HepG2 (cell line): ENCODE measurements at regions of chr12 and their contacts with region 1.

Region 1: GRCh38 chr12:6367065-6367968 is 8.0 kb downstream of the SCNN1A start:
- DNase-seq: peak; percentile 56
- ATAC-seq: no peak
- H3K4me3 ChIP-seq: no peak overlapping the region
- H3K27ac ChIP-seq: peak overlapping the region; percentile 44
- H3K4me1 ChIP-seq: peaks cover 61% of the 10 kb centered on the region
- H3K27me3 ChIP-seq: no peaks in the 10 kb centered on the region
- CTCF ChIP-seq: peak; percentile 69
- EP300 ChIP-seq: no peak
- POLR2A ChIP-seq: no peak
- RAD21 ChIP-seq: peak; percentile 44; the same call in 1 of the 2 replicates

Region 2: DNA sequence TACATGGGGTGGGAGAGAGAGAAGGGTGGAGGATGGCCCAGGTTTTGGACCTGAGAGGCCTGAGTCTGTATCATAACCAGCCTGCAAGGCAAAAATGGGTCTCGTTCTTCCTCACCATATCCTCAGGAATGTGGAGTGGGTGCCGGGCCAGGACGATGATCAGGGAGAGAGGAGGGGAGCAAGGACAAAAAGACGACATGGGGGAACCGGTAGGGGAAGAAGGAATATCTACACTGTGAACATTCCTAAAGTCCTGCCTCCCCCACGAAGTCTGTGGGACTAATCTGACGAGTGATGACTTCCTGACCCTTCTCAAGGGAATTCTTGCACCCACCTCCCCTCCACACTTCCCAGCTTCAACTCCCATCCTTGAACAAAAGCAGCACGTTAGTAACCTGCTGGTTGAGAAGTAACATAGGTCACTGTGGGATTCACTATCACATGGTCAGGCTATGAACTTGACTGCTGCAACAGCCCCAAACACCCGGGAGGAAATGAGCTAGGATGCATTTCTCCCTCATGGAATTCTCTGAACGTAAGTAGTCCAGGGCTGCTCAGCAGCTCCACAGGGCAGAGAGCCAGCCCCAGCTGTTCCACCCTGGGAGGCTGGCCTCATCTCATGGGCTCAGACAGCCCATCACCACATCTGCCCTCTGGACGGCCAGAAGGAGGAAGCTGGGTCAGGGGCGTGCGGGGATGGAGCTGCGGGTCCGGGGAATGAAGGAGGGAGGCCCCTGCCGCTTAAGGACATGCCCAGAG is 206.0 kb before region 1 on chr12:
- CTCF ChIA-PET with region 1: no interaction called
- POLR2A ChIA-PET with region 1: no interaction called
- in situ Hi-C with region 1: no loop called
- intact Hi-C with region 1: no loop called
- DNase-seq: no peak
- ATAC-seq: peak; percentile 14; the same call in 1 of the 3 replicates
- H3K4me3 ChIP-seq: no peak overlapping the region
- H3K27ac ChIP-seq: no peak overlapping the region
- H3K4me1 ChIP-seq: peaks cover 30% of the 10 kb centered on the region
- H3K27me3 ChIP-seq: peaks cover 4 to 18% of the 10 kb centered on the region in 2 experiments; a peak in 2 of 5 replicates
- CTCF ChIP-seq: no peak
- EP300 ChIP-seq: no peak
- POLR2A ChIP-seq: no peak
- RAD21 ChIP-seq: no peak

Region 3: DNA sequence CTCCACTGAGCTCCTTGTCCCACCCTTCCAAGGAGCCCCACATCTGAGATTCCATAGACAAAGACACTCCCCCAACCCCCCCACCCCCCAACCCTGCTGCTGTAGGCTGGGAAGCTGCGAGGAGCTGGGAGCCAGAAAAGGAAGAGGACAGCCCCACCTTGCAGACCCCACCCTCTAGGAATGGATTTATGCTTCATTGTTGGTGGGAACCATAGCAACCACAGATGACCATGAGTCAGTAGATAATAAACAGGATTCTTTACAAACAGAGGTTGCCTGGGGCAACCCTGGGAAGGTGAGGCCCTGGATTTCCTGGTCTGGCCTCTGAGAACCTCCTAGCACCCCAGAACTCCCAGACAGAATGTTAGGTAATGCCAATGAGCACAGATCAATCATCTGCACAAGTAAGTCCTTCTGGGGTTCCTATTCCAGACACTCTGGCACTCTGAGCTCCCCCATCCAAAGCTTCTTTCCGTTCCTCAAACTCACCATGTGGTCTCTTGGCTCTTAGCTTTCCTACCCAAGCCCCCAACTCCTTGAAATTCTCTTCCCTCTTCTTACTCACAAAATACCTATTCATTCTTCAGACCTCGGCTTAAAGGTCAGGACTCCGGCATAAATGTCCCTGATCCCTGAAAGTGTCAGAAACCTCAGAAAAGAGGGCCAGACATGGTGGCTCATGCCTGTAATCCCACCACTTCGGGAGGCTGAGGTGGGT is 72.1 kb before region 1 on chr12:
- CTCF ChIA-PET with region 1: no interaction called
- POLR2A ChIA-PET with region 1: interaction called, 10 read pairs
- in situ Hi-C with region 1: no loop called
- intact Hi-C with region 1: no loop called
- DNase-seq: peak; percentile 98
- ATAC-seq: peak; percentile 91
- H3K4me3 ChIP-seq: peak overlapping the region; percentile 5 to 51 (median 33); a peak in 4 of 6 replicates
- H3K27ac ChIP-seq: peak overlapping the region; percentile 100
- H3K4me1 ChIP-seq: peaks cover 75% of the 10 kb centered on the region
- H3K27me3 ChIP-seq: no peaks in the 10 kb centered on the region
- CTCF ChIP-seq: no peak
- EP300 ChIP-seq: peak; percentile 81 to 94
- POLR2A ChIP-seq: peak; percentile 19 to 79; a peak in 3 of 4 replicates
- RAD21 ChIP-seq: no peak

Region 4: DNA sequence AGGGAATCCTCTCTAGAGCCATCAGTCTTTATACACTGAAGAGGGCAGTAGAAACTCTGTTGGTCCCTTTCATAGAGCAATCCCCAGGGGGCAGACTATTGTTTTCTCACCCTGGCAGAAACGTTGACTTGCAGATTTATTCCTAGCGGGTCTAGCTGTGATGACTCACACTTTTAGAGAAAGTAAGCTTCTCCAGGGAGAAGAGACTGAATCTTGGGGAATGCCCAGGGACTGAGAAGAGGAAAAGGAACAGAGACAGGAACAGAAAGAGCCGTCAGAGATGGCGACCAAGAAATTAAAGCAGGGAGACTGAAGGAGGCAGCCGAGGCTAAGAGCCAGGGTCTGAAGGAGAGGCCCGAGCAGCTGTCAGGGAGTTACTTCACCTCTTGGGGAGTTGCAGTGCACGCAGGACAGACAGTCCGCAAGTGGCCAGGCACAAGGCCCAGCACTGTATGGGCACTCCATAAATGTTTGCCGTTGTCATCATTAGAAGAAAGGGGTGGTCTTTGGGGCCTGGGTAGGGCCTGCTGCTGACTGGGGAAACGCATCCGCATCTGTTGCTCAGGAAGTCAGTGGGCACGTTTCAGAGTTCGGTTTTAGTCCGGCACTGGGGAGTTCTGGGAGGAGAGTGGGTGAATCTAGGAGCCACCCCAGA is 43.9 kb before region 1 on chr12:
- CTCF ChIA-PET with region 1: interaction called, 7 read pairs
- POLR2A ChIA-PET with region 1: interaction called, 12 read pairs
- in situ Hi-C with region 1: no loop called
- intact Hi-C with region 1: loop called (anchors 1 kb)
- DNase-seq: peak; percentile 78
- ATAC-seq: peak; percentile 67
- H3K4me3 ChIP-seq: no peak overlapping the region
- H3K27ac ChIP-seq: peak overlapping the region; percentile 37
- H3K4me1 ChIP-seq: peaks cover 46% of the 10 kb centered on the region
- H3K27me3 ChIP-seq: no peaks in the 10 kb centered on the region
- CTCF ChIP-seq: peak; percentile 58
- EP300 ChIP-seq: no peak
- POLR2A ChIP-seq: no peak
- RAD21 ChIP-seq: peak; percentile 48; the same call in 1 of the 2 replicates

Region 5: GRCh38 chr12:6341417-6342139 is 25.7 kb before region 1 on chr12 and contains the start of gene TNFRSF1A:
- CTCF ChIA-PET with region 1: no interaction called
- POLR2A ChIA-PET with region 1: interaction called, 278 read pairs
- in situ Hi-C with region 1: loop called (anchors 5 kb)
- intact Hi-C with region 1: no loop called
- DNase-seq: peak; percentile 65
- ATAC-seq: peak; percentile 56
- H3K4me3 ChIP-seq: peak within 1 kb of the TSS; percentile 85 to 99 (median 97)
- H3K27ac ChIP-seq: peak within 1 kb of the TSS; percentile 82
- H3K4me1 ChIP-seq: peaks cover 80% of the 10 kb centered on the region
- H3K27me3 ChIP-seq: no peaks in the 10 kb centered on the region; a peak in 1 of 5 replicates
- CTCF ChIP-seq: no peak
- EP300 ChIP-seq: peak; percentile 36 to 54; a peak in 1 of 4 replicates
- POLR2A ChIP-seq: no peak; a peak in 1 of 4 replicates
- RAD21 ChIP-seq: no peak; the same call in 1 of the 2 replicates
- total RNA-seq, gene TNFRSF1A: 21.9 and 41.5 TPM in 2 replicates

Region 6: GRCh38 chr12:6347367-6348337 is 19.7 kb before region 1 on chr12:
- CTCF ChIA-PET with region 1: no interaction called
- POLR2A ChIA-PET with region 1: interaction called, 278 read pairs
- in situ Hi-C with region 1: no loop called
- intact Hi-C with region 1: no loop called
- DNase-seq: no peak
- ATAC-seq: no peak
- H3K4me3 ChIP-seq: no peak overlapping the region
- H3K27ac ChIP-seq: no peak overlapping the region
- H3K4me1 ChIP-seq: peaks cover 57% of the 10 kb centered on the region
- H3K27me3 ChIP-seq: no peaks in the 10 kb centered on the region
- CTCF ChIP-seq: no peak
- EP300 ChIP-seq: no peak
- POLR2A ChIP-seq: no peak
- RAD21 ChIP-seq: no peak

Region 7: DNA sequence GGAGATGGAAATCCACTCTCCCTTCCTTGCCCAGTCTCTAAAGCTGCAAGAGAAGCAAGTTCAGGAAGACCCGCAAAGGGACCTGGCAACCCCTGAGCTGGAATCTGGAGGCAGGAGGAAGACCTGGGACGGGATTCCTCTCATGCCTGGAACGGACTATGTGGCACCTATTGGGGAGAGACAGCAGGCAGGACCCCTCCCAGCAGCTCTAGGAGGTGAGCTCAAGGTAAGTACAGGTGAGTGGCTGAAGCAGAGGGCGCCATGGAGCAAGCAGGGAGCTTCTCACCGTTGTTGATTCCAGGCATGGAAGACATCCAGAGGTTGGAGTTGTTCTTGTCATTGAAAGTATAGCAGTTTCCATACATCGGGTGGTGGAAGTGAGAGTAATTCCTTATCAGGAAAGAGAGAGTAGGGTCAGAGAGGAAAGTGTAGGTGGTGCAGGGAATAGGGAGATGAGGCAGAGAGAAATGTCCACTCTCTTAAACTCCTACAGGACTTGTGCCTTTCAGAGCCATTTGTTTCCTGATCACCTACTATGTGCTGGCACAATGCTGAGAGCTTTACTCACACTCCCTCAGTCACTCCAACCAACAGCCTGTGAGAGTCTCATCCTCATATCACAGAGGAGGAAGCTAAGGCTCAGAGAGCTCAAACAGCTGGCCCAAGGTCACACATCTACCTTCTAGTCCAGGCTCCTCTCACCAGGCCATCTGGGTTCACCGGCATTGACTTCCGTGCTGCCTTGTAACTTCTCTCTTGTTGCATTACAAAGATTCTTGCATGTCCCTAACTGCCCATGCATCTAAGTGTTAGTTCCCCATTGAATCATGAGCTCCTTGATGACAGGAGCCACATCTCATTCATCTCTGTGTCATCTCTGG is 11.6 kb before region 1 on chr12:
- CTCF ChIA-PET with region 1: no interaction called
- POLR2A ChIA-PET with region 1: interaction called, 10 read pairs
- in situ Hi-C with region 1: no loop called
- intact Hi-C with region 1: no loop called
- DNase-seq: no peak
- ATAC-seq: peak; percentile 52
- H3K4me3 ChIP-seq: no peak overlapping the region
- H3K27ac ChIP-seq: no peak overlapping the region
- H3K4me1 ChIP-seq: peaks cover 54% of the 10 kb centered on the region
- H3K27me3 ChIP-seq: no peaks in the 10 kb centered on the region
- CTCF ChIP-seq: peak; percentile 56
- EP300 ChIP-seq: no peak
- POLR2A ChIP-seq: no peak
- RAD21 ChIP-seq: no peak

Region 8: DNA sequence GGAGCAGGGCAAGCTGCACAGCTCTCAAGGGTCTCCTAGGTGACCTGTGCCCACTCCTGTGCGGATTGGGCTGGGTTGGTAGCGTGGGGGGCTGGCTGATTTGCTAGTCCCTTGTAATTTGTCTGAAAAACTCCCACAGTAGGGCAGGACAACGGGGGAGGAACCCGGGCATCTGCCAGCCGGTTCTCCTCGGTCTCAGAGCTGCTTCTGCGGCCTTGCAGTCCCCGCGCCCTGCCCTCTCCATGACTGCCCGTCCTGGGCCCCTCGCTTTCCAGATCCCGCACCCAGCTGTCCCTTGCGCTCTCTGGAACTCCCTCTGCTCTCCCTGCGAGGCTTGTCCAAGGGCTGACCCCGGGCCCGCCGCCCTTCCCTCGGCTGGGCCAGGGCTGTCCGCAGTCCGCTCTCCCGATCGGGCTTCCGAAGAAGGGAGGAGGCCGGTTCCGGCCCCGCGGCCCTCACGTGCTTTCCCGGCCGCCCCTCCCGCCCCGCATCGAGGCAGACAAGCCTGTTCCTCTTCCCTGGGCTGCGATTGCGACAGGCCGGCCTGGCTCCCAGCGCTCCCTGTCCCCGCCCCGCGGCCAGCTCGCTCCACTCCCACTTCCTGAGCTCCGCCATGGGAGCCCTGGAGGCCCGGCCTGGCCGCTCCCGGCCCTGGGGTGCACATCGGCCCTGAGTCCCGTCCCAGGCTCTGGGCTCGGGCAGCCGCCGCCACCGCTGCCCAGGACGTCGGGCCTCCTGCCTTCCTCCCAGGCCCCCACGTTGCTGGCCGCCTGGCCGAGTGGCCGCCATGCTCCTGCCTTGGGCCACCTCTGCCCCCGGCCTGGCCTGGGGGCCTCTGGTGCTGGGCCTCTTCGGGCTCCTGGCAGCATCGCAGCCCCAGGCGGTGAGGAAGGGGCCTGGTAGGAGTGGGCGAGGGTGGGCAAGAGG is 16.5 kb after region 1 on chr12 and contains the start of gene LTBR:
- CTCF ChIA-PET with region 1: no interaction called
- POLR2A ChIA-PET with region 1: interaction called, 136 read pairs
- in situ Hi-C with region 1: no loop called
- intact Hi-C with region 1: no loop called
- DNase-seq: peak; percentile 83
- ATAC-seq: peak; percentile 91
- H3K4me3 ChIP-seq: peak within 1 kb of the TSS; percentile 81 to 95 (median 87)
- H3K27ac ChIP-seq: peak within 1 kb of the TSS; percentile 86
- H3K4me1 ChIP-seq: peaks cover 59% of the 10 kb centered on the region
- H3K27me3 ChIP-seq: no peaks in the 10 kb centered on the region; a peak in 1 of 5 replicates
- CTCF ChIP-seq: peak; percentile 52; the same call in 1 of the 2 replicates
- EP300 ChIP-seq: peak in 1 of 2 experiments; percentile 33; a peak in 1 of 4 replicates
- POLR2A ChIP-seq: peak; percentile 67 to 74; a peak in 3 of 4 replicates
- RAD21 ChIP-seq: peak; percentile 36; the same call in 1 of the 2 replicates
- total RNA-seq, gene LTBR: 12.1 and 34.8 TPM in 2 replicates